Activated CD4-positive, alpha-beta T cell treated with anti-CD3 and anti-CD28 coated beads for 36 hours (primary cell): ENCODE measurements at regions of chr7 and their contacts with region 1.

Region 1: GRCh38 chr7:91264046-91264923 is at the start of gene FZD1:
- DNase-seq: peak; percentile 89
- ATAC-seq: peak; percentile 90
- H3K4me3 Mint-ChIP-seq: peak within 1 kb of the TSS; percentile 76
- H3K27ac Mint-ChIP-seq: peak within 1 kb of the TSS; percentile 65
- H3K4me1 Mint-ChIP-seq: peaks cover 8% of the 10 kb centered on the region
- H3K27me3 Mint-ChIP-seq: peaks cover 41% of the 10 kb centered on the region
- total RNA-seq, gene FZD1: 0.47 to 0.69 TPM

Region 2: DNA sequence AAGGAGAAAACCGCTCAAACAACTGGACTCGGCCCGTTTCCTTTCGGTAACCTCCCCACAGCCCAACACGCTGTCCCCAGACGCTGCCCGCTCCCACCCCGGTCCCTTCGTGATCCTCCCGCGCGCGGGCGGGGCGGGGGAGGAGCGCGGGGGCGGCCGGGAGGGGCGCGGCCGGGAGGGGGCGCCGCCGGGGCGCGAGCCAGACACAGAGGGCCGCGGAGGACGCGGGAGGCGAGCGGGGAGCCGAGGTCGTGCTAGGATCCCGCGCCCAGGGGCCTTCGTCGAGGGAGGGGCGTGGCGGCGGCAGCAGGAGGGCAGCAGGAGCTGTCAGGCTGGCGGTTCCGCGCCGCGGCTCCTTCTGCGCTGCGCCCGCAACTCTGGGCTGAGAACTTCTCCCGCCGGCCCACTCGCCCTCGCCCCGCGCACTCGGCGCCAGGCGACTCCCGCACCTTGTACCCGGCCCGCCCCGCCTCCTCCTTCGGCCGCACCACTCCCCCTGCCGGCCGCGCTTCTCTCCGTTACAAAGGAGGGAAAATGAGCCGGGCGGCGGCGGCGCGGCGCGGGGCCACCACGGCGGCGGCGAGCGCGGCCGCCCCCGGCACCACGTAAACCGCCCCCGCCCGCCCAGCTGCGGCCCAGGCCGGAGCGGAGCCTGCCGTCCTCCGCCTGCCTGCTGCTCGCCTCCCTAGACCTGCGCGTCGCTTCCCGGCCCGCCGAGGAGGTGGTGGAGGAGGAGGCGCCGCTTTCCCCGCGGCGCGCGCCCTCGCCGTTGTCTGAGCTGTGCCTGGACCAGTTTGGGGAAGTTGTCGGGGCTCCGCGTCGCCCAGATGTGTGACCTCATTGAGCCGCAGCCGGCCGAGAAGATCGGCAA is 668.2 kb before region 1 on chr7 and contains the start of gene CDK14:
- CTCF ChIA-PET with region 1: no interaction called
- POLR2A ChIA-PET with region 1: no interaction called
- intact Hi-C with region 1: loop called in 1 of 2 experiments (anchors 5 kb)
- DNase-seq: peak; percentile 76
- ATAC-seq: peak; percentile 74
- H3K4me3 Mint-ChIP-seq: peak within 1 kb of the TSS; percentile 67
- H3K27ac Mint-ChIP-seq: peak within 1 kb of the TSS; percentile 42
- H3K4me1 Mint-ChIP-seq: peaks cover 20% of the 10 kb centered on the region
- H3K27me3 Mint-ChIP-seq: peaks cover 46% of the 10 kb centered on the region
- total RNA-seq, gene CDK14: 0.80 to 0.84 TPM

Region 3: GRCh38 chr7:91089382-91089963 is 174.8 kb before region 1 on chr7:
- CTCF ChIA-PET with region 1: no interaction called
- POLR2A ChIA-PET with region 1: no interaction called
- intact Hi-C with region 1: loop called (anchors 2 to 10 kb)
- DNase-seq: peak; percentile 14
- ATAC-seq: peak; percentile 51
- H3K4me3 Mint-ChIP-seq: no peak overlapping the region
- H3K27ac Mint-ChIP-seq: no peak overlapping the region
- H3K4me1 Mint-ChIP-seq: peaks cover 22% of the 10 kb centered on the region
- H3K27me3 Mint-ChIP-seq: no peaks in the 10 kb centered on the region

Region 4: DNA sequence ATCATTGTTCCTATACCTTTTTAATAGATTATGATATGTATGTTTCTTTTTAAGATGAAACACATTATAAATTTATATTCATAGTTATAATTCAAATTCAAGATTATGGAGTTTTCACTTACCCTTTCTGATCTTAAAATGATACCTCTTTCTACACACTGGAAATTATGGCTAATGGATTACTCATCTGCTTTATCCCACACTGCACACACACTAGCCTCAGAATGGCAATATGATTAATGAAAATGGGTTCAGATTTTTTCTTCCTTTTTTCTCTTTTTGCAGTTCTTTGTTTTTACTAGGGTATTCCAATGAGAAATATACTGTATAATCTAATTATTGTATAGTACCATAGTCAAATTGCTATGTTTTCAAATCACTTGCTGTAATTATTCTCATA is 82.3 kb before region 1 on chr7:
- CTCF ChIA-PET with region 1: no interaction called
- POLR2A ChIA-PET with region 1: no interaction called
- intact Hi-C with region 1: no loop called
- DNase-seq: no peak
- ATAC-seq: no peak
- H3K4me3 Mint-ChIP-seq: no peak overlapping the region
- H3K27ac Mint-ChIP-seq: no peak overlapping the region
- H3K4me1 Mint-ChIP-seq: no peaks in the 10 kb centered on the region
- H3K27me3 Mint-ChIP-seq: peaks cover 2% of the 10 kb centered on the region

Region 5: GRCh38 chr7:91424371-91424770 is 160.1 kb after region 1 on chr7:
- CTCF ChIA-PET with region 1: no interaction called
- POLR2A ChIA-PET with region 1: no interaction called
- intact Hi-C with region 1: no loop called
- DNase-seq: no peak
- ATAC-seq: no peak
- H3K4me3 Mint-ChIP-seq: no peak overlapping the region
- H3K27ac Mint-ChIP-seq: no peak overlapping the region
- H3K4me1 Mint-ChIP-seq: no peaks in the 10 kb centered on the region
- H3K27me3 Mint-ChIP-seq: peaks cover 5% of the 10 kb centered on the region

Region 6: GRCh38 chr7:91940572-91941341 is 676.5 kb after region 1 on chr7 and contains the start of gene AKAP9:
- CTCF ChIA-PET with region 1: no interaction called
- POLR2A ChIA-PET with region 1: no interaction called
- intact Hi-C with region 1: loop called in 1 of 2 experiments (anchors 2 kb)
- DNase-seq: peak; percentile 94
- ATAC-seq: peak; percentile 91
- H3K4me3 Mint-ChIP-seq: peak within 1 kb of the TSS; percentile 87
- H3K27ac Mint-ChIP-seq: peak within 1 kb of the TSS; percentile 94
- H3K4me1 Mint-ChIP-seq: peaks cover 29% of the 10 kb centered on the region
- H3K27me3 Mint-ChIP-seq: no peaks in the 10 kb centered on the region
- total RNA-seq, gene AKAP9: 25.3 to 25.4 TPM